Activated CD8-positive, alpha-beta T cell treated with anti-CD3 and anti-CD28 coated beads for 36 hours (primary cell): ENCODE measurements at regions of chr1 and their contacts with region 1.

Region 1: DNA sequence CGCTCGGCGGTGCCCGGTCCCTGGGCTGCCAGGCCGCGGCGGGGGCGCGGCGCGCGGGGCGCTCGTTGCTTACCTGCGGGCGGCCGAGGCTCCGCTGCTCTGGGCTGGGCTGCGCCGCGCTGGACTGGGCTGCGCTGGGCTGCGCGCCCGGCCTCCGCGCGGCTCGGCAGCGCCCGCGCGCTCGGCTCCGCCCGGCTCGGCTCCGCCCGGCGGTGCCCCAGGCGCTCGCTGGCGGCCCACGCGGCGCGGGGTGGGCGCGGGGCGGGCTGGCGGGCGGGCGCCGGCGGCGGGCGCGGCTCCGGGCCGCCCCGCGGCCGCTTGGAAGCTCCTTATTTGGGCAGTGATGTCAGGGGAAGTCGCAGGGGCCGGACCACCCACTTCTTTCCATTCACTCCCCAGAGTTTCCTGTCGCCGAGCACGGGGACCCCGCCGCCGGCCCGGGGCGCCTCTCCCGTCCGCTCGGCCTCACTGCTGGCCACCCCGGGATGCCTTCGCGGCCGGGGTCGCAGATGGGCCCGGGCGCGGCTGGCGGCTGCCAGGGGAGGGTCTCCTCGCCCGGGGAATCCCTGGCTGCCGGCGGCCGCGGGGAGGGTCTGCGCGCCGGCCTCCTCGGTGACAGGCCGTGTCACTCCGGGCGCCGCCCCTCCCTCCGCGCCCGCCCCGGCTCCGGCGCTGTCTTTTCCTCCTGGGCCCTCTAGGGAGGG is 177.7 kb upstream of the EDN2 start:
- DNase-seq: peak; percentile 88
- ATAC-seq: peak; percentile 75
- H3K4me3 Mint-ChIP-seq: peak overlapping the region; percentile 96
- H3K27ac Mint-ChIP-seq: peak overlapping the region; percentile 65
- H3K4me1 Mint-ChIP-seq: peaks cover 73% of the 10 kb centered on the region
- H3K27me3 Mint-ChIP-seq: no peaks in the 10 kb centered on the region
- CTCF ChIP-seq: no peak

Region 2: GRCh38 chr1:41639332-41639936 is 22.8 kb before region 1 on chr1:
- CTCF ChIA-PET with region 1: interaction called, 8 read pairs
- POLR2A ChIA-PET with region 1: interaction called, 31 read pairs
- intact Hi-C with region 1: no loop called
- DNase-seq: peak; percentile 90
- ATAC-seq: peak; percentile 66
- H3K4me3 Mint-ChIP-seq: peak overlapping the region; percentile 61
- H3K27ac Mint-ChIP-seq: no peak overlapping the region
- H3K4me1 Mint-ChIP-seq: peaks cover 46% of the 10 kb centered on the region
- H3K27me3 Mint-ChIP-seq: no peaks in the 10 kb centered on the region
- CTCF ChIP-seq: no peak

Region 3: GRCh38 chr1:41650028-41650880 is 12.0 kb before region 1 on chr1:
- CTCF ChIA-PET with region 1: interaction called, 9 read pairs
- POLR2A ChIA-PET with region 1: interaction called, 11 read pairs
- intact Hi-C with region 1: no loop called
- DNase-seq: peak; percentile 73
- ATAC-seq: peak; percentile 79
- H3K4me3 Mint-ChIP-seq: no peak overlapping the region
- H3K27ac Mint-ChIP-seq: peak overlapping the region; percentile 92
- H3K4me1 Mint-ChIP-seq: peaks cover 70% of the 10 kb centered on the region
- H3K27me3 Mint-ChIP-seq: no peaks in the 10 kb centered on the region
- CTCF ChIP-seq: no peak

Region 4: GRCh38 chr1:41673378-41673777 is 11.2 kb after region 1 on chr1:
- CTCF ChIA-PET with region 1: interaction called, 5 read pairs
- POLR2A ChIA-PET with region 1: interaction called, 14 read pairs
- intact Hi-C with region 1: no loop called
- DNase-seq: peak; percentile 75
- ATAC-seq: peak; percentile 65
- H3K4me3 Mint-ChIP-seq: peak overlapping the region; percentile 37
- H3K27ac Mint-ChIP-seq: peak overlapping the region; percentile 83
- H3K4me1 Mint-ChIP-seq: peaks cover 80% of the 10 kb centered on the region
- H3K27me3 Mint-ChIP-seq: no peaks in the 10 kb centered on the region
- CTCF ChIP-seq: no peak

Region 5: DNA sequence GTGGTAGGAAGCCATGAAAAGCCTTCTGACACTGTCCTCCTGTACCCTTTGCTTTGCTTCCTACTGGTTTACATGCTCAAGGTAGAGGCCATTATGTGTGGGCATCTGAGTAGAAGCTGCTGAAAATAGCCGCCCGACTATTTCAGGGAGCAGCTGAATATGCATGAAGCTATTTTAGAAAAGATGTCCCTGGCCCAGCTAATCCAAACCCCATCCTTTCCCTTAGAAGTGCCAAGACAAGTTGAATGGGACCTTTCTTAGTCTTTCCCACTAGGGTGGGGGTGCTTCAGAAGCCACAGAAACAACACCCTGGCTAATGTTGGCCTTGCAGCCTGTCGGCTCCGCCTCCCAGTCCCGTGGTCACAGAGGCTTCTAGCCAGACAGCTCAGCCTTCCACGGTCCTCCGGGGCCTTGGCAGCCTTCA is 27.4 kb after region 1 on chr1:
- CTCF ChIA-PET with region 1: no interaction called
- POLR2A ChIA-PET with region 1: no interaction called
- intact Hi-C with region 1: no loop called
- DNase-seq: no peak
- ATAC-seq: no peak
- H3K4me3 Mint-ChIP-seq: no peak overlapping the region
- H3K27ac Mint-ChIP-seq: no peak overlapping the region
- H3K4me1 Mint-ChIP-seq: peaks cover 37% of the 10 kb centered on the region
- H3K27me3 Mint-ChIP-seq: no peaks in the 10 kb centered on the region
- CTCF ChIP-seq: no peak

Region 6: DNA sequence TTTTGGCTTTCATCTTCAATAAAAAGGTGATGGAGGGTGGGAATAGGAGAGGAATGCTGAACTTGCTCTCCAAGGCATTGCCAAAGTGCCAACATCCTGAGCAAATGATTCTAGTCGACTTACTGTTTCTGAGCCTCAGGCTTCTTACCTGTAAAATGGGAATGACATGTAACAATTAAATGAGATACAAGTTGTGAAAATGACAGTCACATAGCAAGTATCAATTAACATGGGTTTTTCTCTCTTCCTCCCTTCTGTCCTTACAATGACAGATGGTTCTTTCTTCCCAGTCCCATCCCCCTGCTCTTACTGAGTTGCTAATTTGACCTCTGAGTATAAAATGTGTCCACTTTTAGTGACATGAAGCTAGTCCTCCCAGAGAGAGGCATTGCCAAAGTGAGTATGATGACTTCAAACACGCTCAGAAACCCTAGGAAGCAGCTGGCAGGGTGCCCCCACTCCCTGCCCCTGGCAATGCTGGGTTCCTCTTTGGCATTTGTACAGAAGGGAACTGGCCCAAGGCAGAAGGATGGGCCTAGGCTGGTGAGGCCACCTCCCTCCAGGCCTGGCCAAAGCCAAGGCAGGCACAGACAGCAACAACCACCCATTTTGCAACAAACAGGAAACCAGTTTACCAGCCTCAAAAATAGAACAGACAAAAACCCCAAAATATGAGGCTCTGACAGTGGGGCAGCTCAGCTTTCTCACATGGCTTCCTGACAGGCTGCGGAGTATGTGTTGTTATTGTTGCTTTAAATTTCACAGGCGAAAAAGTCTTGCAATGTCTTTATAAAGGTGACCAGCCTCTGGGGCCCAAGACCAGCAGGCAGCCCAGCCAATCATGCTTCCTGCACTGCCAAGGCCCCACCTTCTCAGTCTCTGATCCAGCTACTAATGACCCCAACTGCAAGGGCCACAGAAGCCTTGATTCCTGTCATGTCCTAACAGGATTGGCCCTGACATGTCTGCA is 140.6 kb after region 1 on chr1:
- CTCF ChIA-PET with region 1: interaction called, 3 read pairs
- POLR2A ChIA-PET with region 1: interaction called, 3 read pairs
- intact Hi-C with region 1: loop called (anchors 5 kb)
- DNase-seq: no peak
- ATAC-seq: no peak
- H3K4me3 Mint-ChIP-seq: no peak overlapping the region
- H3K27ac Mint-ChIP-seq: peak overlapping the region; percentile 86
- H3K4me1 Mint-ChIP-seq: peaks cover 83% of the 10 kb centered on the region
- H3K27me3 Mint-ChIP-seq: no peaks in the 10 kb centered on the region
- CTCF ChIP-seq: no peak

Region 7: DNA sequence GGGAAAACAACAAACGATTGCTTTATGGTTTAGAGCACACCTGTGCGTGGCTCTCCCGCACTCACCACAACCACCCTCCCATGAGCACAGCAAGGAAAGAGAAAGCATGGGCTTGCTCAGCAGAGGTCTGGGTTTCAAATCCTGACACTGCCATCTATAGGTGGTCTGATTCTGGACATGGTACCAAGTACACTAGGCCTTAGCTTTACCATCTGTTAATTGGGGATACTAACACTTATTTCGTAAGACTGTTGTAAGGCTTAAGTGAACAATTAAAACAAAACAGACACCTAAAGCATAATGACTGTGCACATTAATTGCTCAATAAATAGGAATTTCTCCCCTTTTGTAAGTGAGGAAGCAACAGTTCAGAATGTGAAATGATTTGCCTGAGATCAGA is 206.4 kb after region 1 on chr1:
- CTCF ChIA-PET with region 1: no interaction called
- POLR2A ChIA-PET with region 1: no interaction called
- intact Hi-C with region 1: loop called (anchors 10 kb)
- DNase-seq: peak; percentile 58
- ATAC-seq: peak; percentile 77
- H3K4me3 Mint-ChIP-seq: no peak overlapping the region
- H3K27ac Mint-ChIP-seq: no peak overlapping the region
- H3K4me1 Mint-ChIP-seq: peaks cover 30% of the 10 kb centered on the region
- H3K27me3 Mint-ChIP-seq: no peaks in the 10 kb centered on the region
- CTCF ChIP-seq: peak; percentile 52